CD14-positive monocyte (primary cell): ENCODE measurements at regions of chr9 and their contacts with region 1.

Region 1: GRCh38 chr9:117725426-117725887 is 21.3 kb downstream of the TLR4 start:
- DNase-seq: peak; percentile 61 to 90 (median 81)
- H3K4me3 ChIP-seq: peak overlapping the region in 2 of 3 experiments; percentile 32 to 59
- H3K4me3 Mint-ChIP-seq: peak overlapping the region; percentile 42 to 67
- H3K27ac ChIP-seq: peak overlapping the region; percentile 85 to 89
- H3K27ac Mint-ChIP-seq: peak overlapping the region; percentile 79 to 99 (median 96)
- H3K4me1 ChIP-seq: peaks cover 81 to 85% of the 10 kb centered on the region in 2 donors
- H3K4me1 Mint-ChIP-seq: peaks cover 89% of the 10 kb centered on the region
- H3K27me3 ChIP-seq: no peaks in the 10 kb centered on the region
- H3K27me3 Mint-ChIP-seq: peaks cover 0 to 4% (median 0%) of the 10 kb centered on the region in 3 donors
- CTCF ChIP-seq: no peak

Region 2: DNA sequence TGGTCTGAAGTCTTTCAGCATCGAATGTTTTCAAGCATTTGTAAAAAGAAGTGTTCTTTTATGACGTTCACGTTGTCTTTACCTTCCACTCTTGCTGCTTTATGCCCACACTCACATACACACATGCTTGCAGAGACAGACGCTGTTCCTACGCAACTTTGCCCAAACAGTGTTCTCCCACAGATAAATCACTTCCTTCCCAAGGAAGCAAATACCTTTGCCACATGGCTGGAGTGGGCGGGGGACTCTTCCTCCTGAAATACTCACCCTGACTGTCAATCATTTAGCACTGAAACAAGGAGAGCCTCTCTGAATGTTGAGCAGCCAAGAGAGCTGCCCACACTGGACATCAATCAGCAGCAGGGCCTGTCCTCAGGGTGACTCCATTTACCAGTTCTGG is 288.2 kb before region 1 on chr9:
- intact Hi-C with region 1: no loop called
- DNase-seq: no peak
- H3K4me3 ChIP-seq: no peak overlapping the region
- H3K4me3 Mint-ChIP-seq: no peak overlapping the region
- H3K27ac ChIP-seq: no peak overlapping the region
- H3K27ac Mint-ChIP-seq: no peak overlapping the region
- H3K4me1 ChIP-seq: no peaks in the 10 kb centered on the region
- H3K4me1 Mint-ChIP-seq: no peaks in the 10 kb centered on the region
- H3K27me3 ChIP-seq: no peaks in the 10 kb centered on the region
- H3K27me3 Mint-ChIP-seq: no peaks in the 10 kb centered on the region
- CTCF ChIP-seq: no peak

Region 3: GRCh38 chr9:117691367-117691766 is 34.1 kb before region 1 on chr9:
- intact Hi-C with region 1: loop called in 1 of 2 experiments (anchors 5 kb)
- DNase-seq: no peak
- H3K4me3 ChIP-seq: no peak overlapping the region
- H3K4me3 Mint-ChIP-seq: no peak overlapping the region
- H3K27ac ChIP-seq: no peak overlapping the region
- H3K27ac Mint-ChIP-seq: no peak overlapping the region
- H3K4me1 ChIP-seq: peaks cover 9% of the 10 kb centered on the region in 2 donors
- H3K4me1 Mint-ChIP-seq: peaks cover 9% of the 10 kb centered on the region
- H3K27me3 ChIP-seq: no peaks in the 10 kb centered on the region
- H3K27me3 Mint-ChIP-seq: peaks cover 0 to 2% (median 0%) of the 10 kb centered on the region in 3 donors
- CTCF ChIP-seq: no peak

Region 4: DNA sequence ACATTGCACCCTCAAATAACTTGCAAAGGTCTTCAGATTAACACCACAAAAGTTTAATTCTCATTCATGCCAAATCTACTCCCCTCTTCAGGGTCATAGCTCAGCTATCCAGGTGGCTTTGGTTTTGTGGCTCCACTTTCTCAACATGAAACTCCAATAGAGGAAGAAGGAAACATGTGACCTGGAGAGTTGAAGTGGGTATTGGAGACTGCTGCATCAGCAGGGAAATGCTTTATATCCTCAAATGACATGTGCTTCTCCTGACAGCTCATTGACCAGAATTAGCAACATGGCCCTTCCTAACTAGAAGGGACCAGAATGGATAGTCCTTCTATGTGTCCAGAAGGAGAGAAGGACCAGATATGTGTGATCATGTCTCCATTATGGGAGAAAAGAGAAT is 52.4 kb after region 1 on chr9:
- intact Hi-C with region 1: loop called in 1 of 2 experiments (anchors 5 kb)
- DNase-seq: peak; percentile 26 to 75 (median 37)
- H3K4me3 ChIP-seq: no peak overlapping the region
- H3K4me3 Mint-ChIP-seq: no peak overlapping the region
- H3K27ac ChIP-seq: no peak overlapping the region
- H3K27ac Mint-ChIP-seq: no peak overlapping the region
- H3K4me1 ChIP-seq: peaks cover 27 to 32% of the 10 kb centered on the region in 2 donors
- H3K4me1 Mint-ChIP-seq: peaks cover 39% of the 10 kb centered on the region
- H3K27me3 ChIP-seq: no peaks in the 10 kb centered on the region
- H3K27me3 Mint-ChIP-seq: peaks cover 0 to 3% (median 3%) of the 10 kb centered on the region in 3 donors
- CTCF ChIP-seq: no peak